ENCODE measurements at regions of chr9 and their contacts with region 1.

Region 1: GRCh38 chr9:91131433-91131839 is 230.3 kb downstream of the AUH start:
- DNase-seq: peak; percentile 54
- H3K4me3 ChIP-seq: no peak overlapping the region
- H3K27ac ChIP-seq: no peak overlapping the region
- H3K4me1 ChIP-seq: no peaks in the 10 kb centered on the region
- H3K27me3 ChIP-seq: no peaks in the 10 kb centered on the region
- CTCF ChIP-seq: no peak

Region 2: DNA sequence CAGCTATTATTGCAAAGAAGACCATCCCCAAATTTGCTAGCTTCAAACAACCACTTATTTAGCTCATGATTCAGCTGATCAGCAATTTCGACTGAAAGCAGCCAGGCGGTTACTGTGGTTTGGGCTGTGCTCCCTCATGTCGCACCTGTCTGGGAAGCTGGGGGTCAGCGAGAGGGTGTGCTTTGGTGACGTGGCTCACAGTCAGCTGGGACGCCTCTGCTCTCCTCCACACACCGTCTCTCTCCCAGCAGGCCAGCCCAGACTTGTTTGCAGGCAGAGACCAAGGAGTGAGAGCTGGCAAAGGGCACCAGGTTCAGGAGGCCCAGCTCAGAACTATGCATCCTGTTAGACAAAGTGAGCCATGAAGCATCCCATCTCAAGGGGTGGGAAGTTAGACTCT is 188.9 kb before region 1 on chr9:
- CTCF ChIA-PET with region 1: no interaction called
- POLR2A ChIA-PET with region 1: no interaction called
- intact Hi-C with region 1: no loop called
- DNase-seq: no peak
- H3K4me3 ChIP-seq: no peak overlapping the region
- H3K27ac ChIP-seq: no peak overlapping the region
- H3K4me1 ChIP-seq: no peaks in the 10 kb centered on the region
- H3K27me3 ChIP-seq: peaks cover 16% of the 10 kb centered on the region
- CTCF ChIP-seq: no peak

Region 3: GRCh38 chr9:91591627-91592026 is 460.2 kb after region 1 on chr9:
- CTCF ChIA-PET with region 1: no interaction called
- POLR2A ChIA-PET with region 1: interaction called, 10 read pairs
- intact Hi-C with region 1: no loop called
- DNase-seq: no peak
- H3K4me3 ChIP-seq: no peak overlapping the region
- H3K27ac ChIP-seq: no peak overlapping the region
- H3K4me1 ChIP-seq: no peaks in the 10 kb centered on the region
- H3K27me3 ChIP-seq: no peaks in the 10 kb centered on the region
- CTCF ChIP-seq: no peak

Measured in A673 (cell line).